Right cardiac atrium (tissue), 5 donors: ENCODE measurements at regions of chr4 and their contacts with region 1.

Region 1: GRCh38 chr4:185886832-185887524 is 75.0 kb upstream of the SORBS2 start:
- DNase-seq: no peak
- ATAC-seq: no peak
- H3K4me3 ChIP-seq: no peak overlapping the region
- H3K27ac ChIP-seq: no peak overlapping the region
- H3K4me1 ChIP-seq: no peaks in the 10 kb centered on the region
- H3K27me3 ChIP-seq: no peaks in the 10 kb centered on the region

Region 2: DNA sequence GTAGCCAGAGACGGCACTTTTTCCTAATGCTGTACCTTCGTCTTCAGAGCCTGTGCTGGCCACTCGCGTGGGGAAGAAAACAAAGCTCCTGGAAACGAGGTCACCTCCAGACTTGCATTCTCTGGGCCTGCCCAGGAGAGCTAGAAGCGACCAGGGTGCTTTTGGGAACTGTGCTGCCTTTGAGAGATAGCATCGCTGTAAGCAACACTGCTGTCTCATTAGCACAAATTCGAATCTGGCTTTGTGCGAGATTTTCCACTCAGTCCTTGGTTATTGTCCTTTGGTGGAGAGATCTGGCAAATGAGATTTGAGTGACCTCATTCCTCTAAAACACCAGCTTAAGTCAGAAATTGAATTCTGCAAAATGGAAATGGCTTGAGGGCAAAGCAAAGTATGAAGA is 115.9 kb after region 1 on chr4:
- intact Hi-C with region 1: loop called in 1 of 4 experiments (anchors 10 kb)
- DNase-seq: no peak
- ATAC-seq: no peak
- H3K4me3 ChIP-seq: no peak overlapping the region
- H3K27ac ChIP-seq: no peak overlapping the region
- H3K4me1 ChIP-seq: no peaks in the 10 kb centered on the region
- H3K27me3 ChIP-seq: no peaks in the 10 kb centered on the region